Calu3 (cell line): ENCODE measurements at regions of chr11 and their contacts with region 1.

Region 1: GRCh38 chr11:123020968-123021367 is 39.3 kb upstream of the BSX start:
- DNase-seq: peak; percentile 31
- H3K4me3 Mint-ChIP-seq: no peak overlapping the region
- H3K27ac Mint-ChIP-seq: no peak overlapping the region
- H3K4me1 Mint-ChIP-seq: peaks cover 7% of the 10 kb centered on the region
- H3K27me3 Mint-ChIP-seq: no peaks in the 10 kb centered on the region
- CTCF ChIP-seq: no peak

Region 2: GRCh38 chr11:122584670-122585069 is 436.3 kb before region 1 on chr11:
- CTCF ChIA-PET with region 1: interaction called, 5 read pairs
- intact Hi-C with region 1: loop called (anchors 5 kb)
- DNase-seq: no peak
- H3K4me3 Mint-ChIP-seq: no peak overlapping the region
- H3K27ac Mint-ChIP-seq: no peak overlapping the region
- H3K4me1 Mint-ChIP-seq: peaks cover 8% of the 10 kb centered on the region
- H3K27me3 Mint-ChIP-seq: peaks cover 5% of the 10 kb centered on the region
- CTCF ChIP-seq: no peak

Region 3: GRCh38 chr11:122628810-122629555 is 392.0 kb before region 1 on chr11:
- CTCF ChIA-PET with region 1: interaction called, 3 read pairs
- intact Hi-C with region 1: loop called (anchors 5 kb)
- DNase-seq: peak; percentile 70
- H3K4me3 Mint-ChIP-seq: no peak overlapping the region
- H3K27ac Mint-ChIP-seq: no peak overlapping the region
- H3K4me1 Mint-ChIP-seq: no peaks in the 10 kb centered on the region
- H3K27me3 Mint-ChIP-seq: peaks cover 6% of the 10 kb centered on the region
- CTCF ChIP-seq: peak; percentile 65

Region 4: DNA sequence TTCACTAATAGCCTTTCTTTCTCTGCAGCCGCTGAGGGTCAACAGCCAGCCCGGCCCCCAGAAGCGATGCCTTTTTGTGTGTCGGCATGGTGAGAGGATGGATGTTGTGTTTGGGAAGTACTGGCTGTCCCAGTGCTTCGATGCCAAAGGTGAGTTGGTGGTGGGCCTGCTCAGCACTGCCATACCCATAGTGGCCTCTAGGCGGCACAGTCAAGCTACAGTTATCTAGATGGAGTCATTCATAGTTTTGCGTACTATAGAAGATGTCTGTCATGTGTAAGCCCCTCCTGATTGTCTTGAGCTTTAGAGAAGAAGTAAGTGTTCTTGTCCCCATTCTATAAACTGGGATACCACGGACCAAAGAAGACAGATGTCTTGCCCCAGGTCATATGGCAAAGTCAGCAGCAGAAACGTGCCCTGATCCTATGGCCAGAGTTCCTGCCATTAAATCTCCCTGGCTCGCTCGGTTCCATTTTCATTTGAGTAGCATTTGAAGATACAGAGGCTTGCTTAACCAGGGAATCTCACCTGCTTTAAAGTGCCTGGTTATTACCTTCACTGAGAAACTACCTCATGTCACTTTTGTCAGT is 224.7 kb before region 1 on chr11:
- CTCF ChIA-PET with region 1: no interaction called
- intact Hi-C with region 1: loop called (anchors 5 kb)
- DNase-seq: peak; percentile 48
- H3K4me3 Mint-ChIP-seq: no peak overlapping the region
- H3K27ac Mint-ChIP-seq: no peak overlapping the region
- H3K4me1 Mint-ChIP-seq: no peaks in the 10 kb centered on the region
- H3K27me3 Mint-ChIP-seq: no peaks in the 10 kb centered on the region
- CTCF ChIP-seq: peak; percentile 74

Region 5: DNA sequence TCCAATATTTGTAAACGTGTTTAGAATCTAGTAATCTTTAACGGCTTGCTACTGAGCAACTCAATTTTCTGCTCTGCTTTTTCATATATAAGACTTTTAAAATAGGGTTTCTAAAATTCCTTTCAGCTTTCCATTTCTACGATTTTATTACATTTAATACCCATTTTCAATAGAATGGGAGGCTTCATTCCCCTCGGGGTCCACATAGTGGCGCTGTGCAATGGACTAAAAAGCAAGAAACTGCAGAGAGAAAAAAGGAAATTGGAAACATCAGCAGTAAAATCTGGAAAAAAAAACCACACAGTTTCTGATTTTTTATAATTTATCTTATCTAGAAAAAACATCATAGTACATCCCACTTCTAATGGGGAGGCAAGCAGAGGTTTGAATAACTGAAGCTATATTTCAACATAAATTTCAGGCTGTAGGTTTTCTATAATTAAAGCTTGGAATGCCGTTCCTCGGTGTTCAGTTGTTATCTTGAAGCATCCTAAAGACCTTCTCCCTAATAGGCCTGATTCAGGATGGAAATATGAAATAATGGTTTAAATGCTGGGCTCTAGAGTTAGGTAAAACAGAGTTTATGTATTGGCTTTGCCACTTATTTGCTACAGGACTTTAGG is 157.2 kb before region 1 on chr11:
- CTCF ChIA-PET with region 1: interaction called, 15 read pairs
- intact Hi-C with region 1: loop called (anchors 1 kb)
- DNase-seq: peak; percentile 37
- H3K4me3 Mint-ChIP-seq: no peak overlapping the region
- H3K27ac Mint-ChIP-seq: no peak overlapping the region
- H3K4me1 Mint-ChIP-seq: peaks cover 29% of the 10 kb centered on the region
- H3K27me3 Mint-ChIP-seq: no peaks in the 10 kb centered on the region
- CTCF ChIP-seq: peak; percentile 51

Region 6: DNA sequence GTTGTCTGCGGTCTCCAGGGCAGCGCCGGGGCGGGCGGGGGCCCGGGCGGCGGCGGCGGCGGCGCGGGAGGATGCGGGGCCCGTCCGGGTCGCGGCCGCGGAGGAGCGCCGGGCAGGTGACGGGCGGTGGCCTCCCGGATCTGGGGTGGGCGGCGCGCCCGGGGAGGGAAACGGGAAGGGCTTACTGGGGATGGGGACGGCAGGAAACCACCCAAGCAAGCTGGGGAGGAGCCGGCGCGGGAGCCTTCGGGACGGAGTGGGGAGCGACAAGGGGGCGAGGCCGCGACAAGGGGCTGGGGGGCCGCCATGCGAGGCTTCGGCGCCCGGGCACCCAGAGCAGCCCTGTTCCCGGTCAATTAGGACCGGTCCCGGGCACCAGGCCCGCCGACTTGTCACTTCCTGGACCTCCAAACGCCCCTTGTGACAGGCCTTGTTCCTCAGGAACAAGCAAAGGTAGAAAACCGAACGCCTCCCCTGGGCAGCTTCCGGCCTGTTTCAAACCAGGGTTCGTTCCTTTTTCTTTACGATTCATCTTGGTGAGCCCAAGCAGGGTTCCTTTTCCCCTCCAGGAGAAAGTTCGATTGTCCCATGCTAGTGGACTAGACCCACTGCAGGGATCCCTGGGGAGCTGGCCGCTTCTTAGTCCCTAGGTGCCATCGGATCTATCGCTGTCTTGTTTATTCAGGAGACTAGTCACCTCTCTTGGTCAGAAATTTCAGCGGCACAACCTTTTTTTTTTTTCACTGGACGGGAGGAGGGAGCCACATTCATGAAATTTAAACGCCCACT is 137.9 kb before region 1 on chr11:
- CTCF ChIA-PET with region 1: interaction called, 4 read pairs
- intact Hi-C with region 1: loop called (anchors 1 kb)
- DNase-seq: peak; percentile 38
- H3K4me3 Mint-ChIP-seq: peak overlapping the region; percentile 79
- H3K27ac Mint-ChIP-seq: peak overlapping the region; percentile 86
- H3K4me1 Mint-ChIP-seq: peaks cover 6% of the 10 kb centered on the region
- H3K27me3 Mint-ChIP-seq: no peaks in the 10 kb centered on the region
- CTCF ChIP-seq: no peak

Region 7: DNA sequence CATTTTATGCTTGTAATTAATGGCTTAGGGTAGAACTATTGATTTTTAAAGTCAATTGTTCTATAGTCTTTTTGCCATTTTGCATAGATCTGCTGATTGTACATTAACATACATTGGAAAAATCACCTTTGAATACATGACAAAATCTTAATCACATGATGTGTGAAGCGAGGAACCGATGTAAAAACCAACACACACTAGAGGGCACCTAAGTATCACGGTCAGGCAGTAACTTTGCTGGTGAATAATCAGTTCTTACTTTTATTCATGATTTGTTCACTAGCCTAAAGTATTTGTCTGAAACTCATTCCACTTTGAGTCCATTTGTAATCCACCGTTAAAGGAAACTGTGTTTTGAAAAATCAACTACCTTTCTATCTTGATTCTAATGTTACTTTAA is 110.2 kb before region 1 on chr11:
- CTCF ChIA-PET with region 1: no interaction called
- intact Hi-C with region 1: loop called (anchors 1 kb)
- DNase-seq: no peak
- H3K4me3 Mint-ChIP-seq: no peak overlapping the region
- H3K27ac Mint-ChIP-seq: no peak overlapping the region
- H3K4me1 Mint-ChIP-seq: no peaks in the 10 kb centered on the region
- H3K27me3 Mint-ChIP-seq: no peaks in the 10 kb centered on the region
- CTCF ChIP-seq: no peak

Region 8: DNA sequence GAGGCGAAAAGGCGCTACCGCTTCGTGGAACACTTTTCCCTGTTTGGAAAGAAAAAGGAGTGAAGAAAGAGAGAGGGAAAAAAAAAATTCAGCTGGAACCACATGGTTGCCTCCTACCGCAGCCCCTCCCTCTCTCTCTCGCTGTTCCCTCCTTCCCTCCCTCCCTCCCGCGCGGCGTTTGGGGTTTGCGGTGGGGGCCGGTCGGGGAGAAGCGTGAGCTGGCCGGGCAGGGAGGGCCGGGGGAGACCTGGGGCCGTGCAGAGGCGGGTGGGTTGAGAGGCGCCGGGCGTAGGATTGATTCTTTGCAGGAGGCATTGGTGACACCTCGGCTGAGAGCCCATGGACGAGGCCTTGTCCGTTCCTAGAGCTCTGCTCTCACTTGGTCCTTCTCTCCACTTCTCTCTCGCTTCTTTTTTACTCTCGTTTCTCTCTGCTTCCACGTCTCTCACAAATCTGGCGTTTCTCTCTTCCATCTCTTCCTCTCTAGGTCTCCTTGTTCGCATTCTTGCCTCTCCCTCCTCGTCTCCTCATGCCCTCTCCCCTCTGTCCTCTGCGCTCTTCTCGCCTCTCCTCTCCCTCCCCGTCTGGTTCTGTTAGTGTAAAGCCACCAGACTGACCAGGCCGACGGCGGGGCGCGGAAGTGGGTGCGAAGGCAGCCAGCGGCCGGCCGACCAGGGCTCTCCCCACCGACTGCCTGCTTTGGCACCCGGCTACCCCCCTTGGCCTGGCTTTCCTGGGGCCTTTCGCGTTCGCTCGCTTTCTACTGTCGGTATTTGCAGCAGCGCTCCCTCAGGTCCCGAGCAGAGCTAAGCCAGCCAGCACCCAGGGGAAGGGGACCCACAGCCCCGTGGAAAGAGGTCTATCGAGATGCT is 174.5 kb after region 1 on chr11 and contains the start of gene CLMP:
- CTCF ChIA-PET with region 1: no interaction called
- intact Hi-C with region 1: no loop called
- DNase-seq: no peak
- H3K4me3 Mint-ChIP-seq: peak within 1 kb of the TSS; percentile 42
- H3K27ac Mint-ChIP-seq: no peak within 1 kb of the TSS
- H3K4me1 Mint-ChIP-seq: peaks cover 8% of the 10 kb centered on the region
- H3K27me3 Mint-ChIP-seq: peaks cover 71% of the 10 kb centered on the region
- CTCF ChIP-seq: no peak
- total RNA-seq, gene CLMP: not detected in 2 replicates